ENCODE measurements at regions of chr17 and their contacts with region 1.

Region 1: GRCh38 chr17:7589204-7589868 is 558 bp downstream of the SOX15 start:
- DNase-seq: peak; percentile 91
- ATAC-seq: peak; percentile 71
- H3K4me3 Mint-ChIP-seq: peak overlapping the region; percentile 70
- H3K27ac Mint-ChIP-seq: peak overlapping the region; percentile 79
- H3K4me1 Mint-ChIP-seq: peaks cover 38% of the 10 kb centered on the region
- H3K27me3 Mint-ChIP-seq: no peaks in the 10 kb centered on the region
- CTCF ChIP-seq: peak; percentile 87

Region 2: DNA sequence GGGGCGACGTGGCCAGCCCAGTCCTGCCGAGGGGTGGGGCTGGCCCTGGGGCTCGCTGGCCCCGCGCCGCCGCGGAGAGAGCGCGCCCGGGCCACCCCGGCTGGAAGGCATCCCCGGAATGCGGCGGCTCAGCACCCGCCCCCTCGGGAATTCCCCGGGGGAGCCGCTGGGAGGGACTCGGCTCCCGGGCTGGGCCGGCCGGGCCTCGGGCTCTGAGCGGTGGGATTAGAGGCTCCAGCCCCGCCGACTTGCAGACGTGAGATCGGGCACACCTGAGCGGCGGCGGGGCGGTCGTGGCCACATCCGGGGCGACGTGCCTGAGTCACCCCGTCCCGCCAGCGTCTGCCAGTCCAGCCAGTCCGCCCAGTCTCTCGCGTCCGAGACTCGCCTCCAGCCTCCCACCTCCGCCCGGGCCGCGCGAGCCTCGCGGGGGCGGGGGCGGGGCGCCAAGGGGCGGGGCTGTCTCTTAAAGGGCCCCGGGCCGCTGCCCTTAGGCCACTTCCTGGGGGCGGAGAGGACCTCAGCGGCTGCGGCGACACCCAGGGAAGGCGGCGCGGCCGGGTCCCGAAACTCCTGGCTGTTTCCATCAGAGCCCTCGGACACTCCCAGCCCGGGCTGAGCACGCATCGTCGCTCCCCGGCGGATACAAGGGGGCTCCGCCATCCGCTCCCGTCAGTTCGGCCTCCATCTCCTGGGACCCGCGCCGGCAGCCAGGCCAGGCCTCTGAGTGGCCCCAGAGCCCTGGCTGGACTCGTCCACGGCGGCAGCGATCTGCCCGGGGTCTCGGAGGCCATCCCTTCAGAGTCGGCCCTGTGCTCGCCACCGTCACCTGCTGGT is 237.5 kb before region 1 on chr17 and contains the start of gene KCTD11:
- CTCF ChIA-PET with region 1: interaction called, 11 read pairs
- POLR2A ChIA-PET with region 1: no interaction called
- DNase-seq: peak; percentile 89
- ATAC-seq: peak; percentile 38
- H3K4me3 Mint-ChIP-seq: peak within 1 kb of the TSS; percentile 81
- H3K27ac Mint-ChIP-seq: peak within 1 kb of the TSS; percentile 60; the same call in 1 of the 2 replicates
- H3K4me1 Mint-ChIP-seq: peaks cover 33% of the 10 kb centered on the region
- H3K27me3 Mint-ChIP-seq: peaks cover 7% of the 10 kb centered on the region
- CTCF ChIP-seq: no peak
- total RNA-seq, gene KCTD11: 8.1 to 9.0 TPM (median 8.2 TPM) in 3 replicates

Region 3: DNA sequence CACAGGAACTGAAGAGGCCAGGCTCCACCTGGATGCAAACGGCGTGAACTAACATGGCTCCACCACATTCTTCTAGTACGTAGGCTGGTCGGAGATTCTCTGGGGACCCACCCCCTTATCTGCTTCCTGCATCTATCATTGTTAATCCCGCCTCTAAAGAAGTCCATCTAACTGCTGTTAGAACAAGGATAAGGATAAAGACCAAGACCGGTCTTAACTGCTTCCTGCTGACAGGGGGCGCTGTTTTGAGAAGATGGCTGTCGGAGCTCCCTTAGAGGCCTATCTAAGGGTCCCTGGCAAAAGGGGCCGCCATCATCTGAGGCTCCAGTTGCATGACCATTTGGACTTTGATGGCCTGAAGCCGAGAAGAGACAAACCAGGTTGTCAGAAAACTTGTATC is 66.3 kb before region 1 on chr17:
- CTCF ChIA-PET with region 1: interaction called, 12 read pairs
- POLR2A ChIA-PET with region 1: no interaction called
- DNase-seq: peak; percentile 58
- ATAC-seq: peak; percentile 100
- H3K4me3 Mint-ChIP-seq: no peak overlapping the region
- H3K27ac Mint-ChIP-seq: peak overlapping the region; percentile 95
- H3K4me1 Mint-ChIP-seq: peaks cover 3% of the 10 kb centered on the region
- H3K27me3 Mint-ChIP-seq: peaks cover 24% of the 10 kb centered on the region
- CTCF ChIP-seq: peak; percentile 65

Region 4: GRCh38 chr17:7614422-7615264 is 25.3 kb after region 1 on chr17 and contains the start of gene FXR2:
- CTCF ChIA-PET with region 1: interaction called, 30 read pairs
- POLR2A ChIA-PET with region 1: interaction called, 11 read pairs
- DNase-seq: peak; percentile 100
- ATAC-seq: peak; percentile 96
- H3K4me3 Mint-ChIP-seq: peak within 1 kb of the TSS; percentile 83
- H3K27ac Mint-ChIP-seq: peak within 1 kb of the TSS; percentile 99
- H3K4me1 Mint-ChIP-seq: peaks cover 22% of the 10 kb centered on the region
- H3K27me3 Mint-ChIP-seq: no peaks in the 10 kb centered on the region
- CTCF ChIP-seq: peak; percentile 36; the same call in 1 of the 2 replicates
- total RNA-seq, gene FXR2: 32.5 to 35.1 TPM (median 33.3 TPM) in 3 replicates

Region 5: DNA sequence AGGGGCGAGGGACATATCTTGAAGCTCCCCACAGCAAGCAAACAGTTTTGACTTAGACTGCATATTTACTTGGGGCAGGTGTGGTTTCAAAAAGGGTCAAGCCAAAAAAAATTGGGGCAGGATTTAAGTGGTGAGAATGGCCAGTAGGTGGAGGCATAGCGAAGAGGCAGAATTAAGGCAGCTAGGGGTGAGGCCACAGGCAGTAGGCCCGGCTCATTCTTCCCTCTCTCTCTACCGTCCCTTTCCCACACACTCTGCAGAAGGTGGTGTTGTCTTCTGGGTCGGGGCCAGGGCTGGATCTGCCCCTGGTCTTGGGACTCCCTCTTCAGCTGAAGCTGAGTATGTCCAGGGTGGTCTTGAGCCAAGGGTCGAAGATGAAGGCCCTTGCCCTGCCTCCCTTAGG is 43.2 kb after region 1 on chr17:
- CTCF ChIA-PET with region 1: interaction called, 29 read pairs
- POLR2A ChIA-PET with region 1: interaction called, 12 read pairs
- DNase-seq: peak; percentile 56
- ATAC-seq: peak; percentile 55
- H3K4me3 Mint-ChIP-seq: no peak overlapping the region
- H3K27ac Mint-ChIP-seq: no peak overlapping the region
- H3K4me1 Mint-ChIP-seq: peaks cover 35% of the 10 kb centered on the region
- H3K27me3 Mint-ChIP-seq: no peaks in the 10 kb centered on the region
- CTCF ChIP-seq: peak; percentile 28; the same call in 1 of the 2 replicates

Region 6: GRCh38 chr17:7656958-7657609 is 67.7 kb after region 1 on chr17:
- CTCF ChIA-PET with region 1: interaction called, 13 read pairs
- POLR2A ChIA-PET with region 1: interaction called, 14 read pairs
- DNase-seq: peak; percentile 94
- ATAC-seq: peak; percentile 91
- H3K4me3 Mint-ChIP-seq: peak overlapping the region; percentile 53
- H3K27ac Mint-ChIP-seq: peak overlapping the region; percentile 97
- H3K4me1 Mint-ChIP-seq: peaks cover 47% of the 10 kb centered on the region
- H3K27me3 Mint-ChIP-seq: peaks cover 14% of the 10 kb centered on the region
- CTCF ChIP-seq: no peak

Region 7: GRCh38 chr17:7703584-7704479 is 114.5 kb after region 1 on chr17:
- CTCF ChIA-PET with region 1: interaction called, 16 read pairs
- POLR2A ChIA-PET with region 1: interaction called, 5 read pairs
- DNase-seq: peak; percentile 81
- ATAC-seq: peak; percentile 68
- H3K4me3 Mint-ChIP-seq: peak overlapping the region; percentile 86
- H3K27ac Mint-ChIP-seq: peak overlapping the region; percentile 88
- H3K4me1 Mint-ChIP-seq: peaks cover 30% of the 10 kb centered on the region
- H3K27me3 Mint-ChIP-seq: peaks cover 13% of the 10 kb centered on the region
- CTCF ChIP-seq: no peak

Measured in WTC11 (cell line).